ENCODE measurements at regions of chr16 and their contacts with region 1.

Region 1: GRCh38 chr16:68040507-68041288 is 17.6 kb downstream of the DUS2 start:
- DNase-seq: peak; percentile 35
- ATAC-seq: peak; percentile 99
- H3K4me3 ChIP-seq: no peak overlapping the region
- H3K27ac ChIP-seq: no peak overlapping the region
- H3K4me1 ChIP-seq: no peaks in the 10 kb centered on the region
- H3K27me3 ChIP-seq: no peaks in the 10 kb centered on the region
- CTCF ChIP-seq: peak; percentile 90

Region 2: DNA sequence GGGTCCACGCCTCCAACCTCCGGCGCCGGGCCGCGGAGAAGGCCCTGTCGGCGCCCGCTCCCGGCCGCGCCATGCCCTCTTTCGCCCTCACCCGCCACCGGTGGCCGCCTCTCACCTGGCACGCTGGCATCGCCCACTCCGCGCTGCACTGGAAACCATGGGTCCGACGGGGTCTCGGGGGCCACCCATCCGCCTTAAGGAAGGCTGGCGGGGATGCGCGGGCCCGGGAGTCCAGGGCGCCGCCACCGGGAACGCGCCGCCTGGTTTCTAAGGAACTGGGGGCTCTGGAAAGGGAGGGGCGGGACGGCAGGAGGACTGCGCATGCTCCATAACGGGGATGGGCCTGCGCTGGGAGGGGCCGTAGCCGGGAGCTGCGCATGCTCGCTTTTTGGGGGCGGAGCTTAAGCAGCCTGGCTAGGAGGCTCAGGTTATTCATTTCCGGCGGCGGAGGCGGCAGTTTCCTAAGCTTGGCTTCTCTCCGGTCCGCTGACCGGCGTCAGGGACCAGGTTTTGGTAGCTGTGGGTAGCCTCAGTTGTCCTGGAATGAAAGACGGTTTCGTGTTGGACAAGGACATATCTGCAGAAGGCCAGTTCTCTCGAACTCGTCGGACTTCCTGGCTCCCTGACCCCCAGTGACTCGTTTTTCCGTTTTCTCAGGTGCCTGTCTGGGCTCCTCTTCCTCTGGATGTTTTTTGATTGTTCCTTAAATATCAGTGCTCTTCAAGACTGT is 321.5 kb before region 1 on chr16 and contains the start of gene GFOD2:
- CTCF ChIA-PET with region 1: no interaction called
- POLR2A ChIA-PET with region 1: no interaction called
- in situ Hi-C with region 1: no loop called
- intact Hi-C with region 1: no loop called
- DNase-seq: peak; percentile 75
- ATAC-seq: peak; percentile 92
- H3K4me3 ChIP-seq: peak within 1 kb of the TSS; percentile 87 to 93
- H3K27ac ChIP-seq: peak within 1 kb of the TSS; percentile 95
- H3K4me1 ChIP-seq: peaks cover 6% of the 10 kb centered on the region
- H3K27me3 ChIP-seq: no peaks in the 10 kb centered on the region
- CTCF ChIP-seq: no peak
- total RNA-seq, gene GFOD2: 15.1 TPM

Region 3: GRCh38 chr16:67993189-67994039 is 47.3 kb before region 1 on chr16:
- CTCF ChIA-PET with region 1: interaction called, 3 read pairs
- POLR2A ChIA-PET with region 1: no interaction called
- in situ Hi-C with region 1: no loop called
- intact Hi-C with region 1: loop called (anchors 5 kb)
- DNase-seq: no peak
- ATAC-seq: peak; percentile 96
- H3K4me3 ChIP-seq: peak overlapping the region in 1 of 2 experiments; percentile 26; a peak in 2 of 4 replicates
- H3K27ac ChIP-seq: peak overlapping the region; percentile 65
- H3K4me1 ChIP-seq: peaks cover 4% of the 10 kb centered on the region; the same call in 1 of the 2 replicates
- H3K27me3 ChIP-seq: no peaks in the 10 kb centered on the region
- CTCF ChIP-seq: peak; percentile 96

Measured in Panc1 (cell line).